SK-N-SH (cell line): ENCODE measurements at regions of chr18 and their contacts with region 1.

Region 1: DNA sequence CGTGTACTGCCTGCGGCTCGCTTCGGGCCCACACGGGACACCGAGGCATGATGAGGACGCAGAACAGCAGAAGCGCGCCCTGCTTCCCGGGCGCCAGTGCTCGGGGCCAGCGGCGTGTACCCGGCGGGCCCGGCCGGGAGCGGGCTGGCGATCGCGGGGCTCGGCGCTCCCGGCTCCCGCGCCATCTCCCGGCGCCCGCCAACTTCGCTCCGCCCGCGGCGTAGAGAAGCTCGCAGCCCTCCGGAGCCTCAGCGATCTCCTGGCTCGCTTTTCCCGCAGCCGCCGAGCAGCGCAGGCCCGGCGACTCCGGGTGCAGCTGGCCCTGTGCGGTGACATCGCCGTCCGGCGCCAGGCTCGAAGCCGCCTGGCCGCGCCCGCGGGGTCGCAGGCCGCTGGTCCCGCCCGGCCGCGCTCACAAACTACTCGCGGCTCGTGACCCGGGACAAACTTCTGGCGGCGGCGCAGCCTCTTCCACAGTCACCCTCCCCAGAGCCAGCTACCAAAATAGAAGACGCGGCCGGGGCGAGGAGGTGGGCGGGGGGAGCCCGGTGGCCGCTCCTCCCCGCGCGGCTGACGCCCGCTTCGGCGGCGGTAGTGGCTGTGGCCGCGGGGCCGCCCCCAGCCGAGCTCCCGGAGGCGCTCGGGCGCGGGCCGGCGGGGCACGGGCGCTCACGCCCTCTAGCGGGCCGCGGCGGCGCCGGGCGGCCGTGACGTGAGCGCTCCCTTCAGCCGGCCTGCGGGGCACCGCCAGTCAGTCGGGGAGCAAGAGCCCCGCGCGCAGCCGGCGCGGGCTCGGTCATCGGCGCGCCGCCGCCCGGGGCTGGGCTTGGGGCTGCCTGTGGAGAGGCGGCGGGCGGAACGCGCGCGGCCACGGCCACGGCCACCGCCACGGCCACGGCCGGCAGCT is at the start of gene PTPRM:
- DNase-seq: peak; percentile 92
- H3K4me3 ChIP-seq: peak within 1 kb of the TSS; percentile 59 to 70
- H3K27ac ChIP-seq: peak within 1 kb of the TSS in 1 of 2 experiments; percentile 62; a peak in 2 of 4 replicates
- H3K4me1 ChIP-seq: peaks cover 0 to 9% of the 10 kb centered on the region in 2 experiments; a peak in 1 of 4 replicates
- H3K27me3 ChIP-seq: peaks cover 17% of the 10 kb centered on the region; the same call in 1 of the 2 replicates
- CTCF ChIP-seq: no peak
- EP300 ChIP-seq: no peak
- RAD21 ChIP-seq: peak; percentile 53
- polyA plus RNA-seq, gene PTPRM: 16.0 and 25.7 TPM in 2 replicates

Region 2: GRCh38 chr18:7221424-7222155 is 345.2 kb before region 1 on chr18:
- CTCF ChIA-PET with region 1: interaction called, 28 read pairs
- POLR2A ChIA-PET with region 1: no interaction called
- DNase-seq: peak; percentile 64
- H3K4me3 ChIP-seq: peak overlapping the region in 1 of 2 experiments; percentile 43; a peak in 1 of 4 replicates
- H3K27ac ChIP-seq: no peak overlapping the region
- H3K4me1 ChIP-seq: no peaks in the 10 kb centered on the region; a peak in 1 of 4 replicates
- H3K27me3 ChIP-seq: no peaks in the 10 kb centered on the region
- CTCF ChIP-seq: peak; percentile 56
- EP300 ChIP-seq: no peak
- RAD21 ChIP-seq: peak; percentile 96

Region 3: GRCh38 chr18:7272311-7273049 is 294.3 kb before region 1 on chr18:
- CTCF ChIA-PET with region 1: interaction called, 133 read pairs
- POLR2A ChIA-PET with region 1: interaction called, 6 read pairs
- DNase-seq: peak; percentile 71
- H3K4me3 ChIP-seq: no peak overlapping the region; a peak in 1 of 4 replicates
- H3K27ac ChIP-seq: peak overlapping the region in 1 of 2 experiments; percentile 31; a peak in 1 of 4 replicates
- H3K4me1 ChIP-seq: peaks cover 0 to 7% of the 10 kb centered on the region in 2 experiments; a peak in 1 of 4 replicates
- H3K27me3 ChIP-seq: no peaks in the 10 kb centered on the region
- CTCF ChIP-seq: no peak
- EP300 ChIP-seq: no peak
- RAD21 ChIP-seq: peak; percentile 86

Region 4: DNA sequence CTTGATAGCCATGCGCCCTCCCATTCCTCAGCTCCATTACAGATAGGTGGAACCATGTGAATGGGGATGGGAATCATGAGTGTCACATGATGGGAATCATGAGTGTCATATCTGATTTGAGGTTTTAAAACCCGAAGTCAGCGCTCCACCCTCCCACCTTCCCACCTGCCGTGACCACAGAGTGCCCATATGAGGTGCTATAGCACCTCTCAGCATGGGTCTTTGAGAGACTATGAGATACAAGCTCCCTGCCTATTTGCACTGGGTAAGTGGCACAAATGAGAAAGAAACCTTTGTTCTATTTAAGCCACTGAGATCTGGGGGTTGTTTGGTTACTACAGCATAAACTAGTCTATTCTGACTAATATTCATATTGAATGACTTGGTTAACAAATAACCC is 78.2 kb before region 1 on chr18:
- CTCF ChIA-PET with region 1: interaction called, 10 read pairs
- POLR2A ChIA-PET with region 1: no interaction called
- DNase-seq: no peak
- H3K4me3 ChIP-seq: no peak overlapping the region
- H3K27ac ChIP-seq: no peak overlapping the region
- H3K4me1 ChIP-seq: no peaks in the 10 kb centered on the region
- H3K27me3 ChIP-seq: no peaks in the 10 kb centered on the region
- CTCF ChIP-seq: no peak
- EP300 ChIP-seq: no peak
- RAD21 ChIP-seq: no peak

Region 5: GRCh38 chr18:7592305-7593071 is 25.7 kb after region 1 on chr18:
- CTCF ChIA-PET with region 1: interaction called, 34 read pairs
- POLR2A ChIA-PET with region 1: no interaction called
- DNase-seq: peak; percentile 36
- H3K4me3 ChIP-seq: no peak overlapping the region
- H3K27ac ChIP-seq: peak overlapping the region in 1 of 2 experiments; percentile 95; a peak in 2 of 4 replicates
- H3K4me1 ChIP-seq: peaks cover 0 to 27% of the 10 kb centered on the region in 2 experiments; a peak in 2 of 4 replicates
- H3K27me3 ChIP-seq: no peaks in the 10 kb centered on the region
- CTCF ChIP-seq: no peak
- EP300 ChIP-seq: no peak
- RAD21 ChIP-seq: peak; percentile 44

Region 6: GRCh38 chr18:7711495-7711894 is 144.7 kb after region 1 on chr18:
- CTCF ChIA-PET with region 1: no interaction called
- POLR2A ChIA-PET with region 1: no interaction called
- DNase-seq: no peak
- H3K4me3 ChIP-seq: no peak overlapping the region
- H3K27ac ChIP-seq: no peak overlapping the region
- H3K4me1 ChIP-seq: no peaks in the 10 kb centered on the region
- H3K27me3 ChIP-seq: no peaks in the 10 kb centered on the region
- CTCF ChIP-seq: no peak
- EP300 ChIP-seq: no peak
- RAD21 ChIP-seq: no peak

Region 7: DNA sequence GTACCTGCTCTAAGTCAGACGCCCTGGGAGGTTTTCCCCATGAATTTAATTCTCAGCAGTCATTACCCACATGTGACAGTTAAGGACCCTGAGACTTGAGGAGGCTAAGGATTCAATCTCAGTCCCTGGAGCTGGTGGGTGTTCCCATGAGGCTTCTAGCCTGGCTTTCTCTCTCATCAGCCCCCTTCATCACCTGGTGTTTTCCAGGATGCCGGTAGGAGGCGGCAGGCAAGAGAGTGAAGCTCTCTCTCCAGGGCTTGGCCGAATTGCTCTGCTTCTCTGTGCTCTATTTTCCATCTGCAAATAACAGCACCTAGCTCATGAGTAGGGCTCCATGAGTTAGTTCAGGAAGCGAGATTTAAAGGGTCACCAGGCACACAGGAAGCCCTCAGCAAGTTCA is 242.2 kb after region 1 on chr18:
- CTCF ChIA-PET with region 1: interaction called, 10 read pairs
- POLR2A ChIA-PET with region 1: no interaction called
- DNase-seq: no peak
- H3K4me3 ChIP-seq: no peak overlapping the region
- H3K27ac ChIP-seq: no peak overlapping the region
- H3K4me1 ChIP-seq: peaks cover 0 to 24% of the 10 kb centered on the region in 2 experiments; a peak in 2 of 4 replicates
- H3K27me3 ChIP-seq: no peaks in the 10 kb centered on the region
- CTCF ChIP-seq: no peak
- EP300 ChIP-seq: no peak
- RAD21 ChIP-seq: no peak

Region 8: DNA sequence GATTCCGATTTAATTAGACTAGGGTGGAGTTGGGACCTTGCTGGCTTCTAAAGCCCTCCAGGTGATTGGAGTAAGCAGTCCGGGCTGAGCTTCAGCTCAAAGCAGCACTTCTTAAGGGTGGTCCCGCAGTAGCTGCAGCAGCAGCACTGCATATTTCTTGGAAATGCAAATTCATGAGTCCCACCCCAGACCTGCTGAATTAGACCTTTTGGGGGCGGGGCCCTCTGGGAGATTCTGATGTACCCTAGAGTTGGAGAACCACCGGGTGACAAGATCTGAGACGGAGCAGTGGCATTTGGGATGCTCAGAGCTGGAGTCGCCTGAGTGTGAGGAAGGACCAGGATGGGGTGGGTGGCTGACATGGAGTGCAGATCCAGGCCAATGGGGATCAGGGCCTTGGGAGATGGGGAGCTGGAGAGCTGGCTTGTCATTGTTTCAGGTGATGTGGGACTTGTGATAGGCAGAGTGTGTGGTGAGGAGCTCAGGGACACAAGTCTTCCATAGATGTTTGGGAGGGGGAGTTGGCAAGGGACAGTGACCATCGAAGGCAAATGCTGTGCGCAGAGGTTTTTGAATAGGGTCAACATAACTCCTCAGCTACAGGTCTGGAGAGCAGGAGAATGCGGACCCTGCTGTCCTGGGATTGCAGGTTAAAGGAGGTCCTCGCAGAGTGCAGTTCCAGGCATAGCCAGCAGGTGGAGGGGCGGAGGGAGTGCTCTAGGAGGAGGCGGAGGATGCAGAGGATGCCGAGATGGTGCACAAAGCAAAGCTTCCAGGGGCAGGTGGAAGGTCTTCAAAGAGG is 911.5 kb after region 1 on chr18:
- CTCF ChIA-PET with region 1: interaction called, 60 read pairs
- POLR2A ChIA-PET with region 1: no interaction called
- DNase-seq: peak; percentile 77
- H3K4me3 ChIP-seq: no peak overlapping the region
- H3K27ac ChIP-seq: no peak overlapping the region
- H3K4me1 ChIP-seq: peaks cover 0 to 6% of the 10 kb centered on the region in 2 experiments; a peak in 1 of 4 replicates
- H3K27me3 ChIP-seq: no peaks in the 10 kb centered on the region
- CTCF ChIP-seq: peak; percentile 72
- EP300 ChIP-seq: no peak
- RAD21 ChIP-seq: peak; percentile 50